ENCODE measurements at regions of chr19 and their contacts with region 1.

Region 1: GRCh38 chr19:2950286-2951124 is 5.7 kb upstream of the ZNF77 start:
- DNase-seq: peak; percentile 98 to 99
- ATAC-seq: peak; percentile 98
- H3K4me3 ChIP-seq: peak overlapping the region; percentile 78
- H3K27ac ChIP-seq: peak overlapping the region; percentile 88 to 95
- H3K4me1 ChIP-seq: peaks cover 6% of the 10 kb centered on the region
- CTCF ChIP-seq: no peak
- EP300 ChIP-seq: no peak
- POLR2A ChIP-seq: peak; percentile 71
- RAD21 ChIP-seq: no peak

Region 2: DNA sequence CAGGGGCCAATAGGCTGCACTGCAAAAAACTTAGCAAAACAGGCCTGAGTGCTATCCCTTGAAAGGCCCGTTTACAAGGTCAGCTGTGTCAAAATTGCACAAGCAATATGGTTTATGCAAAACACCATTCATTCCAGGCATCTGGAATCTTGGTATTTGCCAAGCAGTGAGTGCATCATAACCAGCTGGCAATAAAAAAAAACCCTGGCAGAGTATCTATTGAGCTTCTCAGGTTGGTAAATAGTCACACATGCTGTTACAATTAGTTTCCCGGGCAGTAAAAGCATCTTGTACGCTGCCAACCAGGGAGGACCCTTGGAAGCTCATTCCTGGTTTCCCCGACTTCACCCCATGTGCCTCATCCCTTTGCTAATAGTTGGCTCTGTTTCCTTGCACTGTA is 27.0 kb before region 1 on chr19:
- CTCF ChIA-PET with region 1: no interaction called
- POLR2A ChIA-PET with region 1: no interaction called
- DNase-seq: no peak
- ATAC-seq: no peak
- H3K4me3 ChIP-seq: no peak overlapping the region
- H3K27ac ChIP-seq: no peak overlapping the region
- H3K4me1 ChIP-seq: no peaks in the 10 kb centered on the region
- CTCF ChIP-seq: no peak
- EP300 ChIP-seq: no peak
- POLR2A ChIP-seq: no peak
- RAD21 ChIP-seq: no peak

Region 3: GRCh38 chr19:2962045-2962561 is 11.6 kb after region 1 on chr19:
- CTCF ChIA-PET with region 1: interaction called, 25 read pairs
- POLR2A ChIA-PET with region 1: no interaction called
- DNase-seq: peak; percentile 24 to 66
- ATAC-seq: peak in 1 of 2 experiments; percentile 51; a peak in 4 of 6 replicates
- H3K4me3 ChIP-seq: no peak overlapping the region
- H3K27ac ChIP-seq: no peak overlapping the region
- H3K4me1 ChIP-seq: no peaks in the 10 kb centered on the region
- CTCF ChIP-seq: peak; percentile 72
- EP300 ChIP-seq: no peak
- POLR2A ChIP-seq: no peak
- RAD21 ChIP-seq: peak; percentile 77

Region 4: GRCh38 chr19:2977001-2977685 is 26.6 kb after region 1 on chr19 and contains the start of gene TLE6:
- CTCF ChIA-PET with region 1: interaction called, 17 read pairs
- POLR2A ChIA-PET with region 1: interaction called, 10 read pairs
- DNase-seq: peak; percentile 95
- ATAC-seq: peak; percentile 98 to 99
- H3K4me3 ChIP-seq: peak within 1 kb of the TSS; percentile 53
- H3K27ac ChIP-seq: peak within 1 kb of the TSS; percentile 76 to 88
- H3K4me1 ChIP-seq: peaks cover 8% of the 10 kb centered on the region; the same call in 2 of the 3 replicates
- CTCF ChIP-seq: no peak
- EP300 ChIP-seq: no peak
- POLR2A ChIP-seq: no peak
- RAD21 ChIP-seq: no peak
- polyA plus RNA-seq, gene TLE6: 3.1 and 6.1 TPM in 2 replicates

Region 5: DNA sequence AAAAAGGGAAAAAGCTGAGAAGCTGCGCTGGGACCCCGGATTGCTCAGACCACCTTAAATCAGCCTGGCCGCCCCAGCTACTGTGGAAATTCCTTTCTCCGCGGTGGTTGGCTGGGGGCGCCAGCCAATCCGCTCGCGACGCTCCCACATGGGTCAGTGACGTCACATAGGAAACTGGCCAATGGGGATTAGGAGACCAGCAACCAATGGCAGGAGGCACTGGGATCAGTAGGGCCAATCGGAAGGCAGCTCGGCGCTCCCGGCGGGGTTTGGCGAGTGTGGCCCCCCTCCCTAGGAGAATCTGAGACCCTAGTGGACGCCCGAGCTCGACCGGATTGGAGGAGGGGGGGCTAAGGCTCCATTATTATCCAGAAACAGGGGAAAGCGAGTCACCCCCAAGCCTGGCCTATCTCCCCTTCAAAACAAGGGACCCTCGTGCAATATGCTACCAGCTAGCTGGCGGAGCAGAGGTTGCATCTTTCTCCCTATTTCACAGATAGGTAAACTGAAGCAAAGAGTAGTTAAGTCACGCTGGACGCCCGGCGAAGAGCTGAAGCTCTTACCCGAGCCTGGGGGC is 85.1 kb after region 1 on chr19:
- CTCF ChIA-PET with region 1: interaction called, 19 read pairs
- POLR2A ChIA-PET with region 1: interaction called, 22 read pairs
- DNase-seq: peak; percentile 98 to 99
- ATAC-seq: peak; percentile 90 to 94
- H3K4me3 ChIP-seq: peak overlapping the region; percentile 65
- H3K27ac ChIP-seq: peak overlapping the region; percentile 90 to 94
- H3K4me1 ChIP-seq: peaks cover 12% of the 10 kb centered on the region
- CTCF ChIP-seq: no peak
- EP300 ChIP-seq: no peak
- POLR2A ChIP-seq: peak; percentile 3; the same call in 1 of the 2 replicates
- RAD21 ChIP-seq: no peak

Region 6: DNA sequence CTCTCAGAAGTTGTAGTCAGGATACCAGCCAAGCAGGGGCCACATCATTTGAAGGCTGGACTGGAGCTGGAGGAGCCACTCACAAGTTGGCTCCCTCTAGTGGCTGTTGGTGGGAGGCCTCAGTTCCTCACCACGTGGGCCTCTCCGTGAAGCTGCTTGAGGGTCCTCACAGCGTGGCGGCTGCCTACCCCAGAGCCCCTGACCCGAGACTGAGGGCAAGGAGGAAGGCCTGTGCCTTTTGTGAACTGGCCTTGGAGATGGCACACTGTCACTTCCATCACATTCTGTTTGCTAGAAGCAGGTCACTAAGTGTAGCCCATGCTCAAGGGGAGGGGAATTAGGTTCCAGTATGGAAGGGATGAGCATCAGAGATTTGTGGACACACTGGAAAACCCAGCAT is 158.3 kb after region 1 on chr19:
- CTCF ChIA-PET with region 1: interaction called, 127 read pairs
- POLR2A ChIA-PET with region 1: interaction called, 5 read pairs
- DNase-seq: peak in 1 of 2 experiments; percentile 55
- ATAC-seq: peak; percentile 67 to 77
- H3K4me3 ChIP-seq: no peak overlapping the region
- H3K27ac ChIP-seq: no peak overlapping the region
- H3K4me1 ChIP-seq: 0 out of 3 replicates have a peak, but pooled peaks cover under 1% of the 10 kb centered on the region
- CTCF ChIP-seq: peak; percentile 59
- EP300 ChIP-seq: no peak
- POLR2A ChIP-seq: no peak
- RAD21 ChIP-seq: peak in 1 of 2 experiments; percentile 39; a peak in 3 of 5 replicates

Measured in A549 (cell line).